Adrenal gland (tissue), 19 donors: ENCODE measurements at regions of chr12 and their contacts with region 1.

Region 1: DNA sequence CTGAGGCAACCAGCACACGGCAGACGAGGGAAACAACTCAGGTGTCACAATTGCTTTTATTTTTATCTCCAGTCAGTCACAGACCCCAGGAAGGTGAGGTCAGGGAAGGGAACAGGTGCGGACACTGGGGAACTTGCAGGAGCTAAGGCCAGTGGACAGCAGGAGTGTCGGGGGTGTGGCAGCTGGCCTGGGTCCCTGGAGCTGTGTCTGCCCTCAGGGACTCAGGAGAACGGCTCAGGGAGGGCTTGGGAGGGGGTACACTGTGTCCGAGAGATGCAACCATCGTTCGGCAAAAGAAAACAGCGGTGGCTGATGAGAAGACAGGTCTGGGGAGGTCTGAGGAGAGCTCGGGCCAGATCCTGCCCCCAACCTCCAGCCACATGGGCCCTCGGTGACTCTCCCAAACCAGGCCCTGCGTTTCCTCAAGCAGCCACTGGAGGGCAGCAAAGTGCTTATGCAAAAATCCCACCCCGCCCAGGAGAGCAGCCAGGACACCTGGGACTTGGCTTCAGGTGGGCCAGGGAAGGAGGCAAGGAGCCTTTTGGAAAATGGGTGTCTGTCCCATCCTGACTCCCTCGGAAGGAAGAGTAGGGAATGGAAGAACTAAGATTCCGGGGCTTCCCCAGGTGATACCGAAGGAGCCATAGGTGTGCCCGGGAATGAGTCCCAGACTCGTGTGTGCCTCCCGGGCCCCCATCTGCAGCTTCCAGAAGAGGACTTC is 24.1 kb upstream of the BCDIN3D start:
- DNase-seq: peak; percentile 58 to 93 (median 76)
- H3K4me3 ChIP-seq: no peak overlapping the region
- H3K27ac ChIP-seq: peak overlapping the region in 2 of 5 donors; percentile 8 to 36
- H3K4me1 ChIP-seq: peaks cover 0 to 21% of the 10 kb centered on the region in 2 donors
- H3K27me3 ChIP-seq: no peaks in the 10 kb centered on the region
- CTCF ChIP-seq: peak; percentile 89 to 98 (median 96)
- POLR2A ChIP-seq: no peak

Region 2: DNA sequence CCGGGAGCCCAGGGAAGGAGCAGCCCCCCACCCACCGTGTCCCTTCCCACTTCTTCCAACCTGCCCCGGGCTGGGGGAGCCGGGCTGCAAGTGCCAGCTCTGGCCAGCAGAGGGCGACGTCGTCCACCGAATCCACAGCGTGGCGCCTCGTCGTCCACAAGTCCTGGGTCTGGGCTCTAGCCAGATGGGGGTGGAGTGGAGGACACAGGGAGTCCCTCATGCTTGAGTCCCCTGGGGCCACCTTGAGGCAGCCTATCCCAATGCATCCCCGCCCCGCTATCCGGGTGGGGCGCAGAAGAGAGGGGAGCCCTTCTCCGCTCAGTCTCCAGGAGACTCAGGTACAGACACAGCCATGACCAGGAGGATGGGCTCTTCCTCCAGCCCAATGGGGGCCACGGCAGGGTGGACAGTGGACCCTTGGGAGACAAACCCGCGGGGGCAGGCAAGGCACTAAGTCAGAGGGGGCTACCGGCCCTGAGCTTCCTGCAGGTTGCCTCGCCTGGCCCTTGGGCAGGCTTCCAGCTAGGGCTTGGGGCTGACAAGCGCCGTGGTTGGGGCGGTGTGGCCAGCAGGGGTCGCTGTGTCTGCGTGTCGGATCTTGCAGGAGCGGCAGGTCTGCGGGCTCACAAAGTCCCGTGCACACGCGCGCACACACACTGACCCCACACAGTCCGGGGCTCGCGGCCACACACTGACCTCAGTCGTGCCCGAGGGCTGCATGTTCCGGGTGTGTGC is 100.2 kb after region 1 on chr12:
- intact Hi-C with region 1: loop called (anchors 5 to 10 kb)
- DNase-seq: peak; percentile 88 to 96 (median 92)
- H3K4me3 ChIP-seq: peak overlapping the region in 2 of 4 donors; percentile 0 to 5
- H3K27ac ChIP-seq: no peak overlapping the region
- H3K4me1 ChIP-seq: peaks cover 5 to 9% of the 10 kb centered on the region in 2 donors
- H3K27me3 ChIP-seq: peaks cover 3% of the 10 kb centered on the region
- CTCF ChIP-seq: peak; percentile 63 to 96 (median 89)
- POLR2A ChIP-seq: no peak